Dorsolateral prefrontal cortex (tissue), 120 donors: ENCODE measurements at regions of chr20 and their contacts with region 1.

Region 1: GRCh38 chr20:58447511-58448391 is 58.7 kb downstream of the VAPB start:
- DNase-seq: no peak
- H3K4me3 ChIP-seq: no peak overlapping the region
- H3K27ac ChIP-seq: no peak overlapping the region
- H3K27me3 ChIP-seq: no peaks in the 10 kb centered on the region
- CTCF ChIP-seq: peak in 52 of 56 donors; percentile 17 to 67 (median 51)

Region 2: GRCh38 chr20:58321205-58321604 is 126.5 kb before region 1 on chr20:
- intact Hi-C with region 1: no loop called
- DNase-seq: no peak
- H3K4me3 ChIP-seq: no peak overlapping the region
- H3K27ac ChIP-seq: no peak overlapping the region
- H3K27me3 ChIP-seq: no peaks in the 10 kb centered on the region
- CTCF ChIP-seq: no peak

Region 3: DNA sequence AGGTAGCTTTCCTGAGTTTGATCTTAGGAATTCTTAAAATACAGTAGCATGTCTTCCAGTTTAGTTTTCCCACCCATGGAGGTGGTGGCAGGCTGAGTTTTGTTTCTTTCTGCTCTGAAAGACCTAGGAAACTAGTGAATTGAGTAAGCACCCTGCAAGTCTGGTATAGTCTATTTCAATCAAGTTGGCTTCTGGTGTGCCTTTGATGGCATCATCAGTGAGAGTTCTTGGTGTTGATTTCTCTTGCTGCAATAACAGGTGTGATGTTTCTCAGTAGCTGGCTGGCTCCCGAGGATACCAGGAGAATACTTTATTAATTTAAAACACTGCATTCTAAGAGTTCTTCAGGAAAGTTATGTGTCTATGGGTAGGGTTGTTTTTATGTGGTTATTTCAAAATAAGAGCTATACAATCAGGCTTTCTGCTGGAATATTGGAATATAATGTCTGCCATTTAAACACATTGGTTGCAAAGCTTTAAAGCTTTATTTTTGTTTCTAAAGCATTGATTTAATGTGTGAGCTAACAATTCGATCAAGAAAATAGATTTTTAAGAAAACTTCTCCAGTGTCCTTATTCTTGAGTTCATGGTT is 39.7 kb before region 1 on chr20:
- intact Hi-C with region 1: loop called in 1 of 2 experiments (anchors 5 kb)
- DNase-seq: no peak
- H3K4me3 ChIP-seq: no peak overlapping the region
- H3K27ac ChIP-seq: peak overlapping the region in 18 of 59 donors; percentile 0 to 59 (median 26)
- H3K27me3 ChIP-seq: no peaks in the 10 kb centered on the region
- CTCF ChIP-seq: no peak